Psoas muscle (tissue), 8 donors: ENCODE measurements at regions of chr20 and their contacts with region 1.

Region 1: GRCh38 chr20:9609887-9610502 is 95.6 kb downstream of the LAMP5 start:
- DNase-seq: no peak
- ATAC-seq: peak in 1 of 4 donors; percentile 54
- H3K4me3 ChIP-seq: no peak overlapping the region
- H3K27ac ChIP-seq: no peak overlapping the region
- H3K4me1 ChIP-seq: no peaks in the 10 kb centered on the region
- H3K27me3 ChIP-seq: no peaks in the 10 kb centered on the region
- CTCF ChIP-seq: peak; percentile 73

Region 2: GRCh38 chr20:9407805-9408421 is 202.1 kb before region 1 on chr20:
- intact Hi-C with region 1: loop called (anchors 1 to 2 kb)
- DNase-seq: no peak
- ATAC-seq: peak; percentile 58 to 88 (median 79)
- H3K4me3 ChIP-seq: no peak overlapping the region
- H3K27ac ChIP-seq: no peak overlapping the region
- H3K4me1 ChIP-seq: no peaks in the 10 kb centered on the region
- H3K27me3 ChIP-seq: no peaks in the 10 kb centered on the region
- CTCF ChIP-seq: peak; percentile 85